Naive thymus-derived CD4-positive, alpha-beta T cell (primary cell): ENCODE measurements at regions of chr6 and their contacts with region 1.

Region 1: GRCh38 chr6:137707590-137708360 is 159.3 kb upstream of the TNFAIP3 start:
- DNase-seq: peak; percentile 44 to 94 (median 89)
- ATAC-seq: peak; percentile 86
- H3K4me3 ChIP-seq: peak overlapping the region; percentile 6
- H3K4me3 Mint-ChIP-seq: peak overlapping the region in 9 of 10 donors; percentile 38 to 82 (median 66)
- H3K27ac ChIP-seq: peak overlapping the region; percentile 79
- H3K27ac Mint-ChIP-seq: peak overlapping the region; percentile 88 to 99 (median 97)
- H3K4me1 ChIP-seq: peaks cover 26 to 37% of the 10 kb centered on the region in 2 donors
- H3K4me1 Mint-ChIP-seq: peaks cover 23 to 74% (median 40%) of the 10 kb centered on the region in 7 donors
- H3K27me3 ChIP-seq: no peaks in the 10 kb centered on the region
- H3K27me3 Mint-ChIP-seq: peaks cover 0 to 5% (median 0%) of the 10 kb centered on the region in 5 donors

Region 2: DNA sequence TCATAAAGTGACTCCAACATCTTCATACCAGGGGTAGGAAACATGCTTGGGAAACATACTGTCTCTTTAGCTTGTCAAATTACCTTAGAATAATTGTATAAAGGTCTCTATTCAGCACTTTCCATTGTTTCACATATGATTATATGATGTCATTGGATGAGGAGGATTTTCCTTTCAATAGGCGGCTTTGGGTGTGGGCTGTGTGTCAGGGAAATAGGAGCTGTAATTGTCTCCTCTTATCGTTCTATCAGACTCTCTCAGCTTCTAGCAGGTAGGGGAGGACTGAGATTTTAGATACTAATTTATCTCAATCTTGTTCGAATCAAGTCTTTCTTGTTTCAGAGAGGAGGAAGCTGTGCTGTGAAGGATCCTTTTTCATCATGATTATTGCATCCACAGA is 34.2 kb before region 1 on chr6:
- CTCF ChIA-PET with region 1: no interaction called
- POLR2A ChIA-PET with region 1: no interaction called
- intact Hi-C with region 1: no loop called
- DNase-seq: no peak
- ATAC-seq: no peak
- H3K4me3 ChIP-seq: no peak overlapping the region
- H3K4me3 Mint-ChIP-seq: no peak overlapping the region
- H3K27ac ChIP-seq: no peak overlapping the region
- H3K27ac Mint-ChIP-seq: no peak overlapping the region
- H3K4me1 ChIP-seq: peaks cover 0 to 5% of the 10 kb centered on the region in 2 donors
- H3K4me1 Mint-ChIP-seq: peaks cover 0 to 31% (median 4%) of the 10 kb centered on the region in 7 donors
- H3K27me3 ChIP-seq: no peaks in the 10 kb centered on the region
- H3K27me3 Mint-ChIP-seq: peaks cover 11 to 36% (median 19%) of the 10 kb centered on the region in 5 donors

Region 3: GRCh38 chr6:137767911-137768690 is 60.3 kb after region 1 on chr6:
- CTCF ChIA-PET with region 1: interaction called, 3 read pairs
- POLR2A ChIA-PET with region 1: interaction called, 3 read pairs
- intact Hi-C with region 1: loop called (anchors 2 kb)
- DNase-seq: peak in 6 of 9 donors; percentile 25 to 49 (median 38)
- ATAC-seq: peak; percentile 81
- H3K4me3 ChIP-seq: no peak overlapping the region
- H3K4me3 Mint-ChIP-seq: peak overlapping the region; percentile 46 to 87 (median 72)
- H3K27ac ChIP-seq: peak overlapping the region; percentile 62
- H3K27ac Mint-ChIP-seq: peak overlapping the region; percentile 83 to 97 (median 93)
- H3K4me1 ChIP-seq: peaks cover 10 to 15% of the 10 kb centered on the region in 2 donors
- H3K4me1 Mint-ChIP-seq: peaks cover 10 to 28% (median 23%) of the 10 kb centered on the region in 7 donors
- H3K27me3 ChIP-seq: no peaks in the 10 kb centered on the region
- H3K27me3 Mint-ChIP-seq: no peaks in the 10 kb centered on the region

Region 4: DNA sequence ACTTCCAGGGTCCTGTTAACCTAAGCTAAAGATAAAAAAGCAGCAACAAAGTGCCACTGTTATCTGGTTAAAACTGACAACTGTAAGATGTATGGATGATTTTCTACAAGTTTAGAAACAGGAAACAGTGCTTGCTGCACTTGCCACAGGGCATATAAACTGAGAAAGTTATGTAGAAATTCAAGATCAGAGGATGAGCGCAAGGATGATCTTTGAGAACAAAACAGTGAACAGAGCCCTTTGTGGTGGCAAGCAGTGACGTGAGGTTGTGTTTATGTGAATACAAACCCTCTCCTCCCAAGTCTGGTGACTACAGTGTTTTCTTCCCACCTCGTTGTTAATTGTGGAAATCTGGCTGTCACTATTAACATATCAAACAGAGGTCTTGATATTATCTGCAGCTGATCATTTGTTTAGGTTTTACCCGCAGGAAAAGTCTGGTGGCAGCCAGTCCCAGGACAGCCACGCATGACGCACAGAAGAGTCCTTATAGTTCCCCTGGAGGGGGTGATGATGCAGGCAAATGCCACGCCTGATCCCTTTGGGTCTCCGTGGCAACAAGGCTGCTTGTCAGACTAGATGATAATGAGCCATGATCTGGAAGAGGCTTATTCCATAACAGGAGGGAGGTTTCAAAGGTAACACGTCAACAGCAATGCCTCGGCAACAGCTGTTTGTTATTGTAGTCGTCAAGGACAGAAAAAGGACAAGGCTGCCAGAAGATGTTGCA is 116.2 kb after region 1 on chr6:
- CTCF ChIA-PET with region 1: interaction called, 7 read pairs
- POLR2A ChIA-PET with region 1: interaction called, 4 read pairs
- intact Hi-C with region 1: loop called (anchors 1 kb)
- DNase-seq: peak; percentile 59 to 100 (median 95)
- ATAC-seq: peak; percentile 87
- H3K4me3 ChIP-seq: peak overlapping the region; percentile 33
- H3K4me3 Mint-ChIP-seq: peak overlapping the region; percentile 72 to 86 (median 79)
- H3K27ac ChIP-seq: peak overlapping the region; percentile 99
- H3K27ac Mint-ChIP-seq: peak overlapping the region; percentile 96 to 100 (median 100)
- H3K4me1 ChIP-seq: peaks cover 43 to 76% of the 10 kb centered on the region in 2 donors
- H3K4me1 Mint-ChIP-seq: peaks cover 48 to 98% (median 93%) of the 10 kb centered on the region in 7 donors
- H3K27me3 ChIP-seq: no peaks in the 10 kb centered on the region
- H3K27me3 Mint-ChIP-seq: no peaks in the 10 kb centered on the region

Region 5: DNA sequence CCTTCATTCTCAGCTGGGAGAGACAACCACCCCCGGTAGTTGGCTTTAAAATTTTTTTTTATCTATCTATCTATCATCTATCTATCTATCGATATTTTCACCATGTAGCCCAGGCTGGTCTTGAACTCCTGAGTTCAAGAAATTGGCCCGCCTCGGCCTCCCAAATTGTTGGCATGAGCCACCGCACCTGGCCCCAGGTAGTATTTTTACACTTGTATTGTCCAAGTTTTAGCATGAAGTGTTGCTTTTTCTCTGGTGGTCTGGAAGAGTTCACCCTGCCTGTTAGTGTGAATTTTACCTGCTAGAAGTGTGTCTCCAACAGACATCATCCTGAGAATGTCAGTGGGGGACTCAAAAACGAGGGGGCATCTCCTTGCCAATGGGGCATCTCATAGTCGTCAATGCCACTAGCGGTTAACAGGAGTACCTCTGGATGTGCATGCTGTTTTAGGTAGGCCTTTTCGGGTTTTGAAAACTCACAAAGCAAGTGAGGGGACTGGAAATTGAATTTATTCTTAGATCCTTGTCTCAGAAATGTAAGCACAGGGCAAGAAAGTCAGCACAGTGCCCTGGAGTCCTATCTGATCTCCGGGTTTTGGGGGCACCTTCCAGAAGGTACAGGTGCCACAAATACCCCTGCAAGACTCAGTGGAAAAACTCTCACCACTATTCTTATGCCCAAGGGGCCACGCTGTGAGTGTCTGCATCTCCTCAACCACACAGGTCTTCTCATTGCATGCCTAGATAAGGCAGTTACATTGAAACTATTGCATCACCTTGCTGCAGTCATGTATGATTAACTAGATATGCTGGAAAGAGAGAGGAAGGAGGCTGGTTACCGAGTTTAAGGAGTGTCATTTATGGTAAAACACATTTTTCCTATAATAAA is 196.4 kb after region 1 on chr6:
- CTCF ChIA-PET with region 1: no interaction called
- POLR2A ChIA-PET with region 1: no interaction called
- intact Hi-C with region 1: loop called in 1 of 2 experiments (anchors 1 kb)
- DNase-seq: peak in 1 of 9 donors; percentile 49
- ATAC-seq: peak; percentile 72
- H3K4me3 ChIP-seq: no peak overlapping the region
- H3K4me3 Mint-ChIP-seq: peak overlapping the region in 7 of 10 donors; percentile 2 to 79 (median 64)
- H3K27ac ChIP-seq: no peak overlapping the region
- H3K27ac Mint-ChIP-seq: peak overlapping the region in 2 of 9 donors; percentile 10 to 91
- H3K4me1 ChIP-seq: peaks cover 4 to 6% of the 10 kb centered on the region in 2 donors
- H3K4me1 Mint-ChIP-seq: peaks cover 4 to 51% (median 22%) of the 10 kb centered on the region in 7 donors
- H3K27me3 ChIP-seq: no peaks in the 10 kb centered on the region
- H3K27me3 Mint-ChIP-seq: peaks cover 0 to 3% (median 0%) of the 10 kb centered on the region in 5 donors

Region 6: GRCh38 chr6:137938770-137939379 is 231.1 kb after region 1 on chr6:
- CTCF ChIA-PET with region 1: interaction called, 37 read pairs
- POLR2A ChIA-PET with region 1: interaction called, 4 read pairs
- intact Hi-C with region 1: loop called in 1 of 2 experiments (anchors 1 kb)
- DNase-seq: no peak
- ATAC-seq: no peak
- H3K4me3 ChIP-seq: no peak overlapping the region
- H3K4me3 Mint-ChIP-seq: no peak overlapping the region
- H3K27ac ChIP-seq: no peak overlapping the region
- H3K27ac Mint-ChIP-seq: peak overlapping the region in 1 of 9 donors; percentile 44
- H3K4me1 ChIP-seq: no peaks in the 10 kb centered on the region
- H3K4me1 Mint-ChIP-seq: peaks cover 0 to 34% (median 7%) of the 10 kb centered on the region in 7 donors
- H3K27me3 ChIP-seq: no peaks in the 10 kb centered on the region
- H3K27me3 Mint-ChIP-seq: no peaks in the 10 kb centered on the region

Region 7: DNA sequence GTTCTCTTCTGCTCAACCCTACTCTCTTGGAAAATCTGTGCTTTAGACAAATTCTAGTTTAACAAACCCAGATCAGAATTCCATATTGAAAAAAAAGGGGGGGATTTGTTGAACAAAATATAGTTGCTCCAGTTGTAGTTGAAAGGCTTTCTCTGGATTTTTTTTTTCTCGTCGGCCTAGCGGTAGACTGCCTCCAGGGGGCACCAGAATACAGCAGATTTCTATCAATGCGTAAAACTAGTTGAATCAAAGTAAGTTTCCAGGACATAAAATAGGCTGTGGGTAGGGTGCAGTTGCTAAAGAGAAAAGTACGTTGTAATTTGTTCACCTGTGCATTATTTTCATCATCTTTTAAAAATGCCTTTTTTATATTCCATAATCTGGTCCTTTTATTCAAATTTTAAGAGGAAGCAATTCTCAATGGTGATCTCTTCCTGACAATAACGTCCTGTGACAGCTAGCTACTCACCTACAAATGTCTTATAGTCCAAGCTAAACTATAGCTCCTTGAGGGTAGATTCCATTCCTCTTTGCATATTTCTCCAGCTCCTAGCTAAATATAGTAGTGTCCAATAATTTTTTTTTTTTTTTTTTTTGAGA is 294.1 kb after region 1 on chr6:
- CTCF ChIA-PET with region 1: interaction called, 6 read pairs
- POLR2A ChIA-PET with region 1: no interaction called
- intact Hi-C with region 1: loop called (anchors 1 kb)
- DNase-seq: peak in 8 of 9 donors; percentile 37 to 65 (median 56)
- ATAC-seq: peak; percentile 79
- H3K4me3 ChIP-seq: no peak overlapping the region
- H3K4me3 Mint-ChIP-seq: no peak overlapping the region
- H3K27ac ChIP-seq: no peak overlapping the region
- H3K27ac Mint-ChIP-seq: peak overlapping the region in 1 of 9 donors; percentile 27
- H3K4me1 ChIP-seq: no peaks in the 10 kb centered on the region
- H3K4me1 Mint-ChIP-seq: peaks cover 0 to 16% (median 5%) of the 10 kb centered on the region in 7 donors
- H3K27me3 ChIP-seq: no peaks in the 10 kb centered on the region
- H3K27me3 Mint-ChIP-seq: peaks cover 0 to 11% (median 0%) of the 10 kb centered on the region in 5 donors